Activated naive CD4-positive, alpha-beta T cell treated with anti-CD3 and anti-CD28 coated beads for 36 hours (primary cell): ENCODE measurements at regions of chr11 and their contacts with region 1.

Region 1: GRCh38 chr11:65888163-65888814 is at the start of gene FIBP:
- DNase-seq: peak; percentile 99
- H3K4me3 Mint-ChIP-seq: peak within 1 kb of the TSS; percentile 97
- H3K27ac Mint-ChIP-seq: peak within 1 kb of the TSS; percentile 95
- H3K4me1 Mint-ChIP-seq: peaks cover 62% of the 10 kb centered on the region
- H3K27me3 Mint-ChIP-seq: no peaks in the 10 kb centered on the region
- total RNA-seq, gene FIBP: 83.1 to 86.6 TPM

Region 2: DNA sequence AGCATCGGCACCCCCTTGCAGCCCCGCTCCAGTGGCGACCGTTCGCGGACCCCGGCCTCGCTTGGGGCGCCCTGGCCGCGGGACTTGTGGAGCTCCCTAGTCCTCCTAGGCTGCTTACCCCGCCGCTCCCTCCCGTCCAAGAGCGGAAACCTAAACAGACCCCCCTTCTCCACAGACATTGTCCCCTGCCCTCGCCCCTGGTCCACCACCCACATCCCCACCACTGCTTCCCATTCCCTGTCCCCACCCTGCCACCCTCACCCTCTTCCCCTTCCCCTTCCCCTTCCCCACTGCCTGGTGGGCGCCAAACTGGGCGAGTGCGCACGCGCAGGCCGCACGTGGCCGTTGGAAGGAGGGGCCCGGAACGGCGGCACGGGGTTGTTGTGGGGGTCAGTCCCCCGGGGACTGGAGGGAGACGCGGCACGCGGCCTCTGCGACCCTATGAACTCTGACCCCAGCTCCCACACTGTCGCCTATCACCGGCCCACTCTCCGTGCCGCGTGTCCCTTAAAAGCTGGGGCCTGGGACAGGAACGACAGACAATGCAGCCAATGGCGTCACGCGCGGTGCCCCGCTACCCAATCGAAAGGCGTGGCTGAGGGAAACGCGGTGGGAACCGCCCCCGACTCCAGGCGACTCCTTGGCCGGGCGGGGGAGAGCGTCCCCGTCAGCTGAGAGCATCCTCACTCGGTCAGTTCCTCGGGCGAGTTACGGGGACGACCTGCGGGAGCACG is 54.8 kb before region 1 on chr11 and contains the start of gene SNX32:
- CTCF ChIA-PET with region 1: interaction called, 12 read pairs
- intact Hi-C with region 1: no loop called
- DNase-seq: peak; percentile 97
- H3K4me3 Mint-ChIP-seq: no peak within 1 kb of the TSS
- H3K27ac Mint-ChIP-seq: no peak within 1 kb of the TSS
- H3K4me1 Mint-ChIP-seq: peaks cover 22% of the 10 kb centered on the region
- H3K27me3 Mint-ChIP-seq: no peaks in the 10 kb centered on the region
- total RNA-seq, gene SNX32: 1.5 to 2.0 TPM

Region 3: GRCh38 chr11:65873318-65874156 is 14.8 kb before region 1 on chr11:
- CTCF ChIA-PET with region 1: interaction called, 57 read pairs
- intact Hi-C with region 1: loop called (anchors 2 kb)
- DNase-seq: peak; percentile 98
- H3K4me3 Mint-ChIP-seq: peak overlapping the region; percentile 87
- H3K27ac Mint-ChIP-seq: peak overlapping the region; percentile 82
- H3K4me1 Mint-ChIP-seq: peaks cover 17% of the 10 kb centered on the region
- H3K27me3 Mint-ChIP-seq: no peaks in the 10 kb centered on the region

Region 4: DNA sequence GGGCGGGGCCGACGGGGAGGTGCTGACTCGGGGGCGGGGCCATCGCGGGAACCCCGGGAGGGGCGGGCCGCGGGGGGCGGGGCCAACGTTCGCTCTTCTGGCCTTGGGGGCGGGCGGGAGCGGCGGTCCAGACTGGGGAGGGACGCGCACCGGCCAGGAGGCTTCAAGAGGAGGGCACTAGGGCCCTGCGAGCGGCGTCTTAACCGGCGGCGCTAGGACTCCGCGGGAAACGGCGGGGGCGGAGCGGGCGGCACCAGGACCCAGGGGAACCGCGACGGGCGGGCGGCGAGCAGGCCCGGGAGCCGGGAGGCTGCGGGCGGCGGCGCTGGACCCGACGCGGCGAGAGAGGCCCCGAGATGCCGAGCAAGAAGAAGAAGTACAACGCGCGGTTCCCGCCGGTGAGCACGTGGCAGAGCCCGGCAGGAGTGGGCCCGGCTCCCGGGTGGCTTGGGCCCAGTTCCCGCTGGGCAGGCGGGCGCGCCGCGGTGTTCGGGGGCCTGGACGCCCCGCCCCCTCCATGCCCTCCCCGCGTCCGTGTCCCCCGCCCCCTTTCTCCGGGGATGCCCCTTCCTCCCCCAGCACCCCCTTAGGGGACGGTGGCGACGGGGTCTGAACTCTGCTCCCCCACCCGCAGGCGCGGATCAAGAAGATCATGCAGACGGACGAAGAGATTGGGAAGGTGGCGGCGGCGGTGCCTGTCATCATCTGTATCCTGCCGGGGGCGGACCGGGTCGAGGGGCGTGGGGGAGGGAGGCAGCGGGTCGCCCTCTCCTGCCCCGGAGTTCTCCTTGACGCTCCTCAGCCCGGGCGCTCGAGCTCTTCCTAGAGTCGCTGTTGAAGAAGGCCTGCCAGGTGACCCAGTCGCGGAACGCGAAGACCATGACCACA is 31.1 kb after region 1 on chr11 and contains the start of gene DRAP1:
- CTCF ChIA-PET with region 1: interaction called, 8 read pairs
- intact Hi-C with region 1: loop called (anchors 1 kb)
- DNase-seq: peak; percentile 99
- H3K4me3 Mint-ChIP-seq: peak within 1 kb of the TSS; percentile 93
- H3K27ac Mint-ChIP-seq: peak within 1 kb of the TSS; percentile 84
- H3K4me1 Mint-ChIP-seq: peaks cover 41% of the 10 kb centered on the region
- H3K27me3 Mint-ChIP-seq: no peaks in the 10 kb centered on the region
- total RNA-seq, gene DRAP1: 117 to 134 TPM

Region 5: GRCh38 chr11:65988791-65989592 is 100.7 kb after region 1 on chr11:
- CTCF ChIA-PET with region 1: interaction called, 113 read pairs
- intact Hi-C with region 1: loop called (anchors 1 kb)
- DNase-seq: peak; percentile 98
- H3K4me3 Mint-ChIP-seq: no peak overlapping the region
- H3K27ac Mint-ChIP-seq: peak overlapping the region; percentile 70
- H3K4me1 Mint-ChIP-seq: peaks cover 4% of the 10 kb centered on the region
- H3K27me3 Mint-ChIP-seq: no peaks in the 10 kb centered on the region

Region 6: DNA sequence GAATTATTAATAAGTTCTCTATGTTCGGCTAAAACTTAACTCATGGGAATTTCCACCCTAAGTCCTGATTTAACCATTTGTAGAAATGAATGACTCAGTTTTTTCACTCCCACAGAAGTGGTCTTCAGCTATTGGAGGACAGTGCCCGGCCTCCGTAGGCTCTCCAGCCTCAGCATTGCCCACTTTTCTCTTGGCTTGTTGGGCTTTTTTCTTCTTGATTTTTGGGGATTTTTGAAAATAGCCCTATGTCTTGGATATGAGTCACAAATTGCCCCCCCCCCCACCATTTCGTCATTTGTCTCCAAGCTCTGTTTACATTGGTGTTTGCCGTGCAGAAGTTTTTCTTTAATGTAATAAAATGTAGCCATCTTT is 248.4 kb after region 1 on chr11:
- CTCF ChIA-PET with region 1: interaction called, 3 read pairs
- intact Hi-C with region 1: loop called (anchors 10 kb)
- DNase-seq: peak; percentile 47
- H3K4me3 Mint-ChIP-seq: no peak overlapping the region
- H3K27ac Mint-ChIP-seq: peak overlapping the region; percentile 66
- H3K4me1 Mint-ChIP-seq: peaks cover 66% of the 10 kb centered on the region
- H3K27me3 Mint-ChIP-seq: no peaks in the 10 kb centered on the region